ENCODE measurements at regions of chr10 and their contacts with region 1.

Region 1: GRCh38 chr10:4813023-4813422 is 13.0 kb upstream of the AKR1E2 start:
- DNase-seq: no peak
- H3K4me3 Mint-ChIP-seq: no peak overlapping the region
- H3K27ac Mint-ChIP-seq: no peak overlapping the region
- H3K4me1 Mint-ChIP-seq: no peaks in the 10 kb centered on the region
- H3K27me3 Mint-ChIP-seq: peaks cover 7% of the 10 kb centered on the region

Region 2: GRCh38 chr10:4825851-4826665 is 13.0 kb after region 1 on chr10 and contains the start of gene AKR1E2:
- CTCF ChIA-PET with region 1: interaction called, 27 read pairs
- POLR2A ChIA-PET with region 1: no interaction called
- DNase-seq: peak; percentile 92
- H3K4me3 Mint-ChIP-seq: peak within 1 kb of the TSS; percentile 79
- H3K27ac Mint-ChIP-seq: peak within 1 kb of the TSS; percentile 86
- H3K4me1 Mint-ChIP-seq: peaks cover 28% of the 10 kb centered on the region
- H3K27me3 Mint-ChIP-seq: peaks cover 19% of the 10 kb centered on the region
- total RNA-seq, gene AKR1E2: 11.2 to 13.8 TPM

Measured in activated CD4-positive, alpha-beta T cell treated with anti-CD3 and anti-CD28 coated beads, Interleukin-2, amount 10 ng/mL, durations not matched to agents 7 days and 5 days (primary cell).